Transverse colon (tissue), 4 donors: ENCODE measurements at regions of chr16 and their contacts with region 1.

Region 1: DNA sequence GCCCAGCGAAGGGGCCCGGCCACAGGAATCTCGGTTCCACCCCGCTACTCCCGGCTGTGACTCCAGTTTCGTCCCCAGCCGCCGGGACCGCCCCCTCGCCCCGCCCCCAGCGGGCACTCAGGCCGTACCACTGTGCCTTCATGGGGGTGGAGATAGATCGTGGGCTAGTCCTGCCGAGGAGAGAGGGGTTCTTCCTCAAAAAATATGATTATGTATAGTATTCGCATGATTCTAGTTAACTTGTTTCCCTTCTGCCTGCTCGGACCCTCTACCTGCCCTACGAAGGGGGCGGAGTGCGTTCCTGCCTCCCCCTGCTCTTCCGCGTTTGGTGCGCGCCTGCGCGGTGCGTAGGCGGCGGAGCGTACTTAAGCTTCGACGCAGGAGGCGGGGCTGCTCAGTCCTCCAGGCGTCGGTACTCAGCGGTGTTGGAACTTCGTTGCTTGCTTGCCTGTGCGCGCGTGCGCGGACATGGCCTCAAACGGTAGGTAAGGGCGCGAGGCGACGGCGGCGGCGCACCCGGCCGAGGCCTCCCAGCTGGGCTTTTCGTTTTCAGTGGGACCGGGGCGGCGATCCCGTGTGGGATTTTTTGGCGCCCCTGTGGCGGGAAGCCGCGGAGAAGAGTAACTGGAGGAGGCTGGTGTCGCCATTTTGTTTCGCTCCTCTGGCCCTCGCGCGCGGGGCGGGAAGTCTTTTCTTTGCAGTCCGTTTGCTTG is at the start of gene FUS:
- DNase-seq: peak; percentile 94
- H3K4me3 ChIP-seq: peak within 1 kb of the TSS; percentile 70 to 99 (median 94)
- H3K27ac ChIP-seq: peak within 1 kb of the TSS; percentile 96 to 99 (median 98)
- H3K4me1 ChIP-seq: peaks cover 19 to 41% (median 32%) of the 10 kb centered on the region in 4 donors
- H3K27me3 ChIP-seq: no peaks in the 10 kb centered on the region
- CTCF ChIP-seq: no peak
- EP300 ChIP-seq: no peak
- POLR2A ChIP-seq: peak; percentile 100
- total RNA-seq, gene FUS: 43.6 to 116 (median 59.0) TPM

Region 2: DNA sequence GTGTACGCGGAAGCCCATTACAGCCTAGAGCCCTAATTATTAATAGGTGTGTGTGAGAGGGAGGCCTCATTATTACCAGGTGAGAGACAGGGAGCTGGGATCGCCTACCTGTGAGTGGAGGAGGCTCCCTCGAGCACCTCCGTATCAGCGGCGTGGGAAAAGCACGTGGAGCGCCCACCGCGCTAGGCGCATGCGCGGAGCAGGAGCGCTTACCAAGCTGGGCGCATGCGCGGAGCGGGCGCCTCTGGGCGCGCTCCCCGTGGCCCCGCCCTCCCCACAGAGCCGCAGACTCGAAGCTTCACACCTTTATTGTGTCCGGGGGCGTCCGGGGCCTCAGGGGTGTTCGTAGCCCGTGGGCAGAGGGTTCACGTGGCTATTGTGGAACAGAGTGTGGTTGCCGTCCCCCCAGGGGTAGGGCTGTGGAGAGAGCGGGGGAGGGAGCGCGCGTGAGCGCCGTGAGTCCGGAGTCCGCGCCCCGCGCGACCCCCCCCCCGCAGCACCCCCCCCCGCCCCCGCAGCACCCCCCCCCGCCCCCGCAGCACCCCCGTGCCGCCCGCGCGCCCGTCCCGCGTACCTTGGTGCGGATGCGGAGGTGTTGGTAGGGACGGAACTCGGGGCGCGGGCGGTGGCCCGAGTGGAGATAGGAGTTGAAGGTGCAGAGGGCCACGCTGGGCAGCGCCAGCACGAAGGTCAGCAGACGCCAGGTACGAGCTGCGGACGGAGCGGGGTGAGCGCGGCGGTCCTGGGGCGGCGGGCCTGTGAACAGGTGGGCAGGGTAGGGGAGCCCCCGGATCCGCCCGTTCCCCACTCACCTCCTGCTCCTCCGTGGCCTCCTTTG is 247.8 kb after region 1 on chr16:
- in situ Hi-C with region 1: loop called in 1 of 4 experiments (anchors 25 kb)
- intact Hi-C with region 1: no loop called
- DNase-seq: peak; percentile 45
- H3K4me3 ChIP-seq: peak overlapping the region in 3 of 4 donors; percentile 15 to 42 (median 18)
- H3K27ac ChIP-seq: no peak overlapping the region
- H3K4me1 ChIP-seq: peaks cover 0 to 5% (median 3%) of the 10 kb centered on the region in 4 donors
- H3K27me3 ChIP-seq: no peaks in the 10 kb centered on the region
- CTCF ChIP-seq: no peak
- EP300 ChIP-seq: no peak
- POLR2A ChIP-seq: no peak